ENCODE measurements at regions of chr6 and their contacts with region 1.

Region 1: DNA sequence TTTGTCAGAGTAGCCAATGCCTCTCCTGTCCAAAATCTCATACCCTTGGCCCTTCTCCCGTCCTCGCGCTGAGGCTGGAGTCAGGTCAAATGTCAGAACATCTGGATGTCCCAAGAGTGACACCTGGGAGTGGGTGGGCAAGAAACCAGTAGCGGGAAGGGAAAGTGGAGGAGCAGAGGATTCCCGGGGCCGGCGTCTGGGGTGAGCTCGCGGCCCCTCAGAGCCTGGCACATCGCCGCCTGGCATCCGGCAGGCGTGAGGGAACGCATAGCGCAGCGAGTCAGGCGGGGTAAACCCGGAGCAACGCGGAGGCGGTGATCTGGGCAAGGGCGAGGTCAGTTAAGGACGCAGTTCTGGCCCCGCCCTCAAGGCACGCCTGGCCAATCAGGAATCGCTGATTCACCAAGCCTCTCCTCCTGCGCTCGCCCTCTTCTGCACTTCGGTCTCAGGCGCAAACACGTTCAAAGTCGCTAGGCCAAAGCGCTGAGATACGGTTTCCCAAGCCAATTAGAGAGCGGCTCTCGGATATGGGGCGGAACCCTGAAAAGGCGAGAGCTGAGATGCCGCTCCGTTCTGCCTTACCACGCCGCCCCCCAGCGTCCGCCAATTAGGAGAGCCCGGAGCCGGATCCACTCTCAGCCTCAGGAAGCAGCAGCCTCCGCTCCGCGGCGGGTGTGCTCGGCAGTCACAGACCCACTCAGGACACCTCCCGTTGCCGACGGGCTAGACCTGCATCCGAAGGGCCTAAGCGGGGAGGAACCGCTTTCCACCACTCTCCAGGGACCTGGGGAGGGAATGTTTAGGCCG is 22.5 kb downstream of the VPS52 start:
- DNase-seq: peak; percentile 97 to 99
- ATAC-seq: peak; percentile 94

Region 2: GRCh38 chr6:33014841-33015634 is 234.1 kb before region 1 on chr6:
- intact Hi-C with region 1: loop called in 1 of 2 experiments (anchors 5 kb)
- DNase-seq: no peak
- ATAC-seq: peak; percentile 69

Region 3: DNA sequence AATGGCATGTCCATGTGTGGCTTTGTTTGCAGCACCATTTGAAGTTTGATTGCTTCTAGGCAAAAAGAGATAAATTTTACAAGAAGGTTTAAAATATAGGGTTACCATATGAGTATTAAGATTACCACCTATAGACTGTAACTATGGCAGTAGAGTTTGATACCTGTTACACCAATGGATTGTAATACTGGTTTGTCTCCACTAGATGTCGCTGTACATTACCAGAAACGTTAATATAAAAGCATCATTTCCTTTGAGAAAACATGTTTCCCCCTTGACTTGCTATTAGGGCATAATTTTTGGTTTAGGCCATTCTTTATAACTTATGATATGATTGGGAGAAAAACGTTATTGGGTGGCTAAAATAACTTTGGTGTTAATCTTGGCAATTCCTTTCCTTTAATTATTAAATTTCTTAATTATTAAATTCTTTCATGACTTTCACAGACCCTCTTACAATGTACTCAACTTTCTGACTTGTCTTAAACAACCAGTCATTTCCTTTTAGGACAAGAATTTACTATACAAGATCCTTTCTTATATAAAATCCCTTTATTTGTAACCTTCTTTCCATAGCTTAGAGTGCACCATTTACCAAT is 130.5 kb before region 1 on chr6:
- intact Hi-C with region 1: loop called in 1 of 2 experiments (anchors 5 kb)
- DNase-seq: no peak
- ATAC-seq: no peak

Region 4: GRCh38 chr6:33161354-33162331 is 87.5 kb before region 1 on chr6:
- intact Hi-C with region 1: loop called in 1 of 2 experiments (anchors 5 kb)
- DNase-seq: peak; percentile 68 to 82
- ATAC-seq: peak; percentile 88

Measured in left colon (tissue), 2 donors.